ENCODE measurements at regions of chr16 and their contacts with region 1.

Region 1: GRCh38 chr16:55465077-55465896 is 13.7 kb upstream of the MMP2 start:
- DNase-seq: no peak
- H3K4me3 ChIP-seq: no peak overlapping the region
- H3K27ac ChIP-seq: no peak overlapping the region
- H3K4me1 ChIP-seq: peaks cover 2% of the 10 kb centered on the region
- H3K27me3 ChIP-seq: no peaks in the 10 kb centered on the region
- CTCF ChIP-seq: peak; percentile 99 to 100 (median 100)
- POLR2A ChIP-seq: no peak

Region 2: DNA sequence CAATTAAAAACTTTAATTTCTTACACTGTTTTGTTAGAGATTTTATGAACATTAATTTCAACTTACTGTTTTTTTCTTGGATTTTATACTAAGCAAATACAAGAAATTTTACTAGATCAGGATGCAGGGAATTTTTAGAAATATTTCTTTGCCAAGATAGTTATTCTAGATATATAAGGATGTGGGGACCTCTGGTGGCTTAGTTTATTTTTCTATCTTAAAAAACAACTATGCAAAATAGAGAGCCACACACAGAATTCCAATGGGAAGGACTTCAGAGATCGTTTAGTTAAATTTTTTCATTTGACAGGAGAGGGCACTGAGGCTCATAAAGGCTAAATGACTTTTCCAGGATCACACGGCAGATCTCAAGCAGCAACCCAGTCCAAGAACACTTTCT is 78.2 kb after region 1 on chr16:
- intact Hi-C with region 1: loop called (anchors 2 kb)
- DNase-seq: no peak
- H3K4me3 ChIP-seq: no peak overlapping the region
- H3K27ac ChIP-seq: no peak overlapping the region
- H3K4me1 ChIP-seq: no peaks in the 10 kb centered on the region
- H3K27me3 ChIP-seq: no peaks in the 10 kb centered on the region
- CTCF ChIP-seq: peak; percentile 33 to 55 (median 45)
- POLR2A ChIP-seq: no peak

Region 3: DNA sequence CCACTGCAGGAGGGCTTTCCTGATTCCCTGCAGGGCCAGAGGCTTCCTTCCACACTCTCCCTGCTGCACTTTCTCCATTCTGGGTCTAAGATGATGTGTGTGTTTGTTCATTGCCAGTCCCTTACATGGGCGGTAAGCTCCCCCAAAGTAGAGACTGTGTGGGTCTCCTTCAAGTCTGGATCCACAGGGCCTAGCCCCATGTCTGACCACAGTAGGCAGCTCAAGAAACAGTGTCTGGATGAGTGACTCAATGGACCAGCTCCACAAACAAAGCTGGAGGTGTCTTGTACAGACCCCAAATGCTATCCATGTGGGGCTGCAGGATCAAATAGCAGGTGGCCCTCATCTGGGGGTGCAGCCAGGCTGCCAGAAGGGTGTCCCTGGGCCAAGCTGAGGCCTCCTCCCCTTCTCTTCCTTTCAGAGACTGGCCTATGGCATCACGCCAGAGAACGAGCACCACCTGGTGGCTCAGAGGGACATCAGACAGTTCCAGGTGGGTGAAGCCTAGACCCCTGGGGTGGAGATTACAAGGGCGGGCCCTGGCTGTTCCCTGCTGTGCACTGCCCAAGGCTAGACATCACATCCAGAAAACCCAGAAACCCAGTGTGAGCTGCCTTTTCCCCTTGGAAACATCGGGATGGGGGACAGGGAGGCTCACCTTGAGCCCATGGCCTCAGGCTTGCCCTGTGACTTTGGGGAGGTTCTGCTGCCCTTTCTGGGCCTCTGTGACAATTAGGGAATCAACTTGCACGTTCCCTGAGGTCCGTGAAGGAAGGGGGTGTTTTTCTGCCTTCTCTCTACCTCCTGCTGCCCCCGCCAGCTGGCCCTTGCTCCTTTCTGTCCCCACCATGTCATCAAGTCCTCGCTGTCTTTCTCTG is 236.4 kb after region 1 on chr16:
- intact Hi-C with region 1: loop called (anchors 5 kb)
- DNase-seq: no peak
- H3K4me3 ChIP-seq: no peak overlapping the region
- H3K27ac ChIP-seq: no peak overlapping the region
- H3K4me1 ChIP-seq: no peaks in the 10 kb centered on the region
- H3K27me3 ChIP-seq: no peaks in the 10 kb centered on the region
- CTCF ChIP-seq: peak; percentile 46 to 61 (median 49)
- POLR2A ChIP-seq: no peak

Region 4: GRCh38 chr16:55842369-55843104 is 377.2 kb after region 1 on chr16:
- intact Hi-C with region 1: loop called (anchors 10 kb)
- DNase-seq: no peak
- H3K4me3 ChIP-seq: no peak overlapping the region
- H3K27ac ChIP-seq: no peak overlapping the region
- H3K4me1 ChIP-seq: no peaks in the 10 kb centered on the region
- H3K27me3 ChIP-seq: no peaks in the 10 kb centered on the region
- CTCF ChIP-seq: peak; percentile 50 to 79 (median 59)
- POLR2A ChIP-seq: no peak